Right cardiac atrium (tissue), 5 donors: ENCODE measurements at regions of chr1 and their contacts with region 1.

Region 1: GRCh38 chr1:220680085-220680687 is 10.0 kb upstream of the C1orf115 start:
- DNase-seq: no peak
- ATAC-seq: peak; percentile 70 to 84
- H3K4me3 ChIP-seq: no peak overlapping the region
- H3K27ac ChIP-seq: no peak overlapping the region
- H3K4me1 ChIP-seq: no peaks in the 10 kb centered on the region
- H3K27me3 ChIP-seq: no peaks in the 10 kb centered on the region

Region 2: GRCh38 chr1:220544901-220545303 is 135.3 kb before region 1 on chr1:
- intact Hi-C with region 1: no loop called
- DNase-seq: no peak
- ATAC-seq: no peak
- H3K4me3 ChIP-seq: no peak overlapping the region
- H3K27ac ChIP-seq: no peak overlapping the region
- H3K4me1 ChIP-seq: no peaks in the 10 kb centered on the region
- H3K27me3 ChIP-seq: no peaks in the 10 kb centered on the region

Region 3: DNA sequence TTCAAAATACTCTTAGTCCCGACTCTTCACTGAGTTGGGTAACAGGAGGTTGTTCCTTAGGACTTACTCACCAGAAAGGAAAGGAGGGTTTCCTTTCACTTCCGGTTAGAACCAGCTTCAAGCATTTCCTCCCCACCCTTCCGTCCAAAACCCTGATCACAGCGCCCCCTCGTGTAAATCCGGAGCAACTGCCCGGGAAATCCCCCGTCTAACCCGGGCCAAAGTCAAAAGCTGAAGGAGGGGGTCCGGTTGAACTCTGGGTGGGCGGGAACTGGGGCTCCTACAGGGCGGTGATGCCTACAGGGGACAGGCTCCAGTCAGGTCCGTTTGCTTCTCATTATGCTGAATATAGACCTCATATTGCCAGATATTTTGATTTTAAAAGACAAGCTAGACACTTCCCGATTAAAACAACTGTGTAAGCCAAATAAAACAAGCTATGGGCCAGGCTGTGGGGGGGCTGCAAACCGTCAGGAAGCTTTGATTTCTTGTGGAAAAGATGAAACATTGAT is 53.0 kb after region 1 on chr1:
- intact Hi-C with region 1: loop called in 1 of 4 experiments (anchors 2 kb)
- DNase-seq: peak; percentile 80 to 89 (median 82)
- ATAC-seq: peak; percentile 93 to 98
- H3K4me3 ChIP-seq: peak overlapping the region; percentile 55
- H3K27ac ChIP-seq: peak overlapping the region; percentile 94
- H3K4me1 ChIP-seq: peaks cover 6% of the 10 kb centered on the region
- H3K27me3 ChIP-seq: no peaks in the 10 kb centered on the region

Region 4: DNA sequence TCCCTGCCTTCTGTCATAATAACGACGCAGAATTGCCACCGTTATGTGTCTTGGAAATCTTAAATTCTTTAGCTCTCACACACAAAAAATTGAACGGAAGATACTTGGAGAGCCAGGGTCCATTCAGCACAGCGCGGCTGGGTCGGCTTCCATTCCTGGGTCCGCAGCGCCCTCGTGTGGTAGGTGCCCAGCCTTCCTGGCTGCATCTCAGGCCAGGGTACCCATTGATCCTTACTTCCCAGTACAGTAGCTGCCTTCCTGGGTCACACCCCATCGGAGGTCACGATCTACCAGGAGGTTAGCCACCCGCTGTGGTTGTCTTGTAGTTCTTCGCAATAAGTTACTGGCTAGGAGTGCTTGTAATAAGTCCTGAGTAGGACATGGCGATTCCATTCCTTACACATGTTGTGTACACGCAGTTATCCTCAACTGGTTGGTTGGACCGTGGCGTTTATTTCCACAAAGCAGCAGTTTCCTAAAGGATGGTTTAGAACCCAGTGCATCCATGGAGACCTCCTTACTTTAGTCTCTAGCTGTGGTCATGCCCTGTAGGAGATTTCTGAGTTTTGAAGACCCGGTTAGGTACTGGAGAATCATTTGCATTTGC is 96.6 kb after region 1 on chr1:
- intact Hi-C with region 1: loop called in 3 of 4 experiments (anchors 5 kb)
- DNase-seq: peak; percentile 80 to 93 (median 93)
- ATAC-seq: peak; percentile 93 to 95
- H3K4me3 ChIP-seq: no peak overlapping the region
- H3K27ac ChIP-seq: no peak overlapping the region
- H3K4me1 ChIP-seq: no peaks in the 10 kb centered on the region
- H3K27me3 ChIP-seq: no peaks in the 10 kb centered on the region